ENCODE measurements at regions of chr10 and their contacts with region 1.

Region 1: GRCh38 chr10:68796605-68797004 is 30.7 kb upstream of the STOX1 start:
- DNase-seq: no peak
- ATAC-seq: no peak
- H3K4me3 ChIP-seq: no peak overlapping the region
- H3K4me3 Mint-ChIP-seq: no peak overlapping the region
- H3K27ac ChIP-seq: no peak overlapping the region
- H3K27ac Mint-ChIP-seq: no peak overlapping the region
- H3K4me1 ChIP-seq: no peaks in the 10 kb centered on the region
- H3K4me1 Mint-ChIP-seq: no peaks in the 10 kb centered on the region
- H3K27me3 ChIP-seq: no peaks in the 10 kb centered on the region
- H3K27me3 Mint-ChIP-seq: no peaks in the 10 kb centered on the region
- CTCF ChIP-seq: no peak

Region 2: DNA sequence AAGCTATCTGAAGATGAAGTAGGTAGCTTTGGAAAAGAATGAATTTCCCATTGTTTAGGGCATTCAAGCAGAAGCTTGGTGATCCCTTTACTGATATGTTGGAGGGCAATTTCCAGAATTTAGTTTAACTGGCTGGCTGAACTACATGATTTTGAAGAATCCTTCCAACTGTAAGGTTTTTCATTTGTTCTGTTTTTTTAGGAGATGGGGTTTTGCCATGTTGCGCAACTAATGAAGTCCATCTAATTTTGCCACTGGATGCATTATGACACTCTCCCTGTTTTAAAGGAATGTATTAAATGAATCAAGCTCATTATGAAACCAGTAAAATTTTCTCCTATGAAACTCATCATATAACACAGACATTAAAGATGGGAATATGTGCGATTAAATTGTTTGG is 98.4 kb after region 1 on chr10:
- CTCF ChIA-PET with region 1: no interaction called
- POLR2A ChIA-PET with region 1: no interaction called
- intact Hi-C with region 1: loop called in 1 of 2 experiments (anchors 1 kb)
- DNase-seq: no peak
- ATAC-seq: no peak
- H3K4me3 ChIP-seq: no peak overlapping the region
- H3K4me3 Mint-ChIP-seq: no peak overlapping the region
- H3K27ac ChIP-seq: no peak overlapping the region
- H3K27ac Mint-ChIP-seq: no peak overlapping the region
- H3K4me1 ChIP-seq: no peaks in the 10 kb centered on the region
- H3K4me1 Mint-ChIP-seq: peaks cover 2% of the 10 kb centered on the region
- H3K27me3 ChIP-seq: no peaks in the 10 kb centered on the region
- H3K27me3 Mint-ChIP-seq: peaks cover 3% of the 10 kb centered on the region
- CTCF ChIP-seq: no peak

Region 3: DNA sequence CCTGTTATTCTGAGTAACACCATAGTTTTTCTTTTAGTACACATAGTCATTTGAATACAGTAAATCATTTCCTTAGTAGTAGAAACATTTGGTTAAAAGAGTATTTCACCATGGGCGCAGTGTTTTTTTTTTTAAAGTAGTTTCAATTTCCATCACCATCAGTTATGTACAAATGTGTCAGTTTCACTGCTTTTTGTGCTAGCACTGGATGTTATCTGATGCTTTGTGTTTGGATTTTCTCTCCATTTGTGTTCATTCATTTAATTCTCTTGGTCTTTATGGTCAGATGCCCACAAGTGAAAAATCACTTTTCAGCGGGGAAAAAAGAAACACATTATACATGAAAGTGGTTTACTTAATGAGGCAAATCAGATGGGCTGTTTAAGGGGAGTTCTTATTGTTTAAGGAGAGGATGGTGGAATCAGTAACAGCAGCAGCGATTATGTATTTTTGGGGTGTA is 465.7 kb after region 1 on chr10:
- CTCF ChIA-PET with region 1: no interaction called
- POLR2A ChIA-PET with region 1: no interaction called
- intact Hi-C with region 1: no loop called
- DNase-seq: no peak
- ATAC-seq: no peak
- H3K4me3 ChIP-seq: no peak overlapping the region
- H3K4me3 Mint-ChIP-seq: no peak overlapping the region
- H3K27ac ChIP-seq: no peak overlapping the region
- H3K27ac Mint-ChIP-seq: no peak overlapping the region
- H3K4me1 ChIP-seq: no peaks in the 10 kb centered on the region
- H3K4me1 Mint-ChIP-seq: peaks cover 3% of the 10 kb centered on the region
- H3K27me3 ChIP-seq: no peaks in the 10 kb centered on the region
- H3K27me3 Mint-ChIP-seq: no peaks in the 10 kb centered on the region
- CTCF ChIP-seq: no peak